ENCODE measurements at regions of chr3 and their contacts with region 1.

Region 1: DNA sequence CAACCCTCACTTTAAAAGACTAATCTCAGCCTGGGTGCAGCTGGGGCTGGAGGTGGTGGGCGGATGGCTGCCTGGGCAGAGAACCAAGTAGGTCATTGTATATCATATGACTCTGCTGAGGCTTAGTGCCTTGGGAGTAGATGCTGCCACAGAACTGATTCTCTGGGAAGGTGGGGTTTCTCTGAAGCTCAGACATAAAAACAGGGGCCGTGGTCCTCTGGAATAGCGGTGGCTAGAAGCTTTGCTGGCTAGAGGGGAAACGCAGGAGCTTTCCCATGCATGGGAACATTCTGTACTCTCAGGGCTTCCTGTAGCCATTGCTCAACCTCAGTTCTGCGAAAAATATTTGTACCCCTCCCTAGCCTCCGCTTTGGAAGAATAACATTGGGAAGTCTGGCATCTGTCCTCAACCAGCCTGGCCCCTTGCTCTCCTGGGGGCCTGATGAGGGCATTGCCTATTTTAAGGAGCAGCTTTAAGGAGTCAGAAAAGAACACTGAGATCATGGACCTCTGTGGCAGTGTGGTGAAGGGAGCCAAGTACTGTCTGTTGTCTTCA is 14.7 kb downstream of the TIMP4 start:
- DNase-seq: peak; percentile 78 to 92
- ATAC-seq: peak; percentile 90 to 92
- H3K4me3 ChIP-seq: peak overlapping the region in 1 of 4 donors; percentile 3
- H3K27ac ChIP-seq: peak overlapping the region; percentile 86 to 92 (median 90)
- H3K4me1 ChIP-seq: peaks cover 32 to 61% of the 10 kb centered on the region in 2 donors
- H3K27me3 ChIP-seq: no peaks in the 10 kb centered on the region
- CTCF ChIP-seq: no peak
- POLR2A ChIP-seq: peak in 1 of 2 donors; percentile 45

Region 2: DNA sequence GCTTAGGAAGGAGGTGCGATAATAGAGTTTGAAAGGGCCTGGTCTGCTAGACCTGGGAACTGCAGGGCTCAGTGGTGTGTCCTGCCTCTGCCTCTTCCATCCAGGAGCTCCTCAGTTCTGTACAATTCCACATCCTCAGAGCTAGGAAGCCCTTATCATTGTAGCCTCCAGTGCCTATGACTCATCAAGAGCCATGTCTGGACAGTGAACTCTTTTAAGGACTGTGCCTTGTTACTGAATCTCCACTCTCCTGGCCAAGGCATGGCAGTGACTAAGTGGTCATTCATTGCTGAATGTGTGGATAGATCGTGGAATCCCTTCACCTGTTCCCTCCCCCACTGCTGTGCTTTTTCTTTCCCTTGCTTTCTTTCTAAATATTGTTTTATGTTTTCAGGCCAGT is 11.8 kb after region 1 on chr3:
- in situ Hi-C with region 1: no loop called
- intact Hi-C with region 1: loop called (anchors 1 kb)
- DNase-seq: peak; percentile 58 to 80
- ATAC-seq: peak; percentile 94 to 98
- H3K4me3 ChIP-seq: no peak overlapping the region
- H3K27ac ChIP-seq: peak overlapping the region; percentile 66 to 78 (median 75)
- H3K4me1 ChIP-seq: peaks cover 20 to 24% of the 10 kb centered on the region in 2 donors
- H3K27me3 ChIP-seq: no peaks in the 10 kb centered on the region
- CTCF ChIP-seq: no peak
- POLR2A ChIP-seq: no peak

Region 3: GRCh38 chr3:12175844-12176453 is 31.9 kb after region 1 on chr3:
- in situ Hi-C with region 1: loop called (anchors 5 kb)
- intact Hi-C with region 1: no loop called
- DNase-seq: peak; percentile 26 to 60
- ATAC-seq: peak; percentile 79 to 86
- H3K4me3 ChIP-seq: no peak overlapping the region
- H3K27ac ChIP-seq: peak overlapping the region in 2 of 4 donors; percentile 12 to 33
- H3K4me1 ChIP-seq: peaks cover 5 to 6% of the 10 kb centered on the region in 2 donors
- H3K27me3 ChIP-seq: no peaks in the 10 kb centered on the region
- CTCF ChIP-seq: peak; percentile 85 to 96 (median 93)
- POLR2A ChIP-seq: no peak

Region 4: GRCh38 chr3:12405432-12406272 is 261.6 kb after region 1 on chr3:
- in situ Hi-C with region 1: no loop called
- intact Hi-C with region 1: no loop called
- DNase-seq: peak; percentile 58 to 62
- ATAC-seq: peak; percentile 76 to 86
- H3K4me3 ChIP-seq: no peak overlapping the region
- H3K27ac ChIP-seq: peak overlapping the region in 3 of 4 donors; percentile 6 to 57 (median 46)
- H3K4me1 ChIP-seq: no peaks in the 10 kb centered on the region
- H3K27me3 ChIP-seq: no peaks in the 10 kb centered on the region
- CTCF ChIP-seq: no peak
- POLR2A ChIP-seq: no peak

Region 5: GRCh38 chr3:12440927-12441326 is 296.9 kb after region 1 on chr3:
- in situ Hi-C with region 1: no loop called
- intact Hi-C with region 1: no loop called
- DNase-seq: no peak
- ATAC-seq: no peak
- H3K4me3 ChIP-seq: no peak overlapping the region
- H3K27ac ChIP-seq: no peak overlapping the region
- H3K4me1 ChIP-seq: peaks cover 0 to 7% of the 10 kb centered on the region in 2 donors
- H3K27me3 ChIP-seq: peaks cover 5 to 20% (median 17%) of the 10 kb centered on the region in 3 donors
- CTCF ChIP-seq: no peak
- POLR2A ChIP-seq: no peak